Pancreas (tissue), 10 donors: ENCODE measurements at regions of chr7 and their contacts with region 1.

Region 1: GRCh38 chr7:98434095-98434494 is 33.2 kb upstream of the BAIAP2L1 start:
- DNase-seq: no peak
- ATAC-seq: no peak
- H3K4me3 ChIP-seq: no peak overlapping the region
- H3K27ac ChIP-seq: no peak overlapping the region
- H3K4me1 ChIP-seq: no peaks in the 10 kb centered on the region
- H3K27me3 ChIP-seq: no peaks in the 10 kb centered on the region
- CTCF ChIP-seq: no peak

Region 2: DNA sequence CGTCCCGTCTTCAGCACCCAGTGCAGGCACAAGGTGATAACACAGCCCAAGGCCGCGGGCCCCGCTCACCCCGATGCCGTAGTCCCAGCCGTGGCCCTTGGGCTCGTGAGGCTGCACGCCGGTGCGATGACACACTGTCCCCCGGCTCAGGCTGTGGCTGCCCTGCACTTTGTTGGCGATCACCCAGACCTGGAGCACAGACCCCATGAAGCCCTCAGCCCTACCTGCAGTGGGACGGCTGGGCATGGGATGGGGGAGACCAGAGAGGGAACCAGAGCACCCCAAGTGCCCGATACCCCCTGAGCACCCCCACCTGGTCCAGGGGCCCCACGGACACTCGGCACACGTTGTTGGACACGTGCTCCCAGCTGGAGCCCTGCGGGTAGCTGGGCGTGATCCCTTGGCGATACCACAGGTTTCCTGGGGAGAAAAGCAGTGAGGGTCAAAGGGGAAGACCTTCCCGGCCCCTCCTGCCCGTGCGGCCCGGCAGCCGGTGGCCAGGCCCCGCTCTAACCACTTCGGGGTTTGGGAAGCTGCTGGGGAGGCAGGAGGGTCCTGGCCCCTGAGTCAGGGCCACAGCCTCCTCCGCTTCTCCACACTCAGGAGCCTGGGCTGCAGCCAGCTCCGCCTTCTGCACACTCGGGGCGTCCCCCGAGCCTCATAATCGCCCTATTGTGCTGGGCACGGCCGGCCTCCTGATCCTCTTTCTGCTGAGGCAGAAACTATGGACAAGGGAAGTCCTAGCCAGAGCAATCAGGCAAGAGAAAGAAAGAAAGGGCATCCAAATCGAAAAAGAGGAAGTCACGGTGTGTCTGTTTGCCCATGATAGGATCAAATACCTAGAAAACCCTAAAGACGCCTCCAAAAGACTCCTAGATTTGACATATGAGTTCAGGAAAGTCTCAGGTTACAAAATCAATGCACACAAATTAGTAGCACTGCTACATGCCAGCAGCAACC is 216.2 kb before region 1 on chr7:
- intact Hi-C with region 1: no loop called
- DNase-seq: peak; percentile 40 to 90 (median 70)
- ATAC-seq: peak; percentile 10 to 17 (median 12)
- H3K4me3 ChIP-seq: peak overlapping the region in 1 of 4 donors; percentile 10
- H3K27ac ChIP-seq: peak overlapping the region; percentile 20 to 82 (median 64)
- H3K4me1 ChIP-seq: peaks cover 12 to 28% (median 12%) of the 10 kb centered on the region in 3 donors
- H3K27me3 ChIP-seq: no peaks in the 10 kb centered on the region
- CTCF ChIP-seq: no peak

Region 3: DNA sequence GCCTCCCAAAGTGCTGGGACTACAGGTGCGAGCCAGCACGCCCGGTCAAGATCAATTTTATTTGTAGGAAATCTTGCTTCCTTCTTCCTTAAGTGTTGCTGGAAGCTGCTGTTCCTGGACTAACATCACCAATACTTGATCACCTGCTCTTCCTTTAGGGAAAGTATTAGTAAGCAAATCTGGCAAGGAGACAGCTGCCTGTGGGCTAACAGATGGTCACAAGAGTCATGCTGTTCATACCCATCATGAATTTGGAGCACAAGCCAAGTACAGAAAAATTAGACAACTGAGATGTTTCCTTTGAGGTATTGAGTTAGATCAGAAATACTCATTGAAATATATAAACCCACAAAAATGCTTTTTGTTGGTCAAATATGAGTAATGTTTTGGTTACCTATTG is 61.1 kb before region 1 on chr7:
- intact Hi-C with region 1: no loop called
- DNase-seq: no peak
- ATAC-seq: peak in 1 of 4 donors; percentile 40
- H3K4me3 ChIP-seq: no peak overlapping the region
- H3K27ac ChIP-seq: no peak overlapping the region
- H3K4me1 ChIP-seq: peaks cover 0 to 9% (median 5%) of the 10 kb centered on the region in 3 donors
- H3K27me3 ChIP-seq: no peaks in the 10 kb centered on the region
- CTCF ChIP-seq: no peak

Region 4: GRCh38 chr7:98745722-98746318 is 311.7 kb after region 1 on chr7:
- intact Hi-C with region 1: loop called (anchors 5 to 10 kb)
- DNase-seq: peak; percentile 67 to 100 (median 86)
- ATAC-seq: peak; percentile 73 to 96 (median 88)
- H3K4me3 ChIP-seq: no peak overlapping the region
- H3K27ac ChIP-seq: no peak overlapping the region
- H3K4me1 ChIP-seq: no peaks in the 10 kb centered on the region
- H3K27me3 ChIP-seq: no peaks in the 10 kb centered on the region
- CTCF ChIP-seq: peak; percentile 76 to 89 (median 81)